ENCODE measurements at regions of chr5 and their contacts with region 1.

Region 1: GRCh38 chr5:159106569-159107282 is 7.0 kb upstream of the EBF1 start:
- DNase-seq: peak; percentile 79
- ATAC-seq: peak; percentile 71
- H3K4me3 Mint-ChIP-seq: peak overlapping the region; percentile 86
- H3K27ac Mint-ChIP-seq: peak overlapping the region; percentile 95
- H3K4me1 Mint-ChIP-seq: peaks cover 53% of the 10 kb centered on the region
- H3K27me3 Mint-ChIP-seq: no peaks in the 10 kb centered on the region
- CTCF ChIP-seq: peak; percentile 69

Region 2: DNA sequence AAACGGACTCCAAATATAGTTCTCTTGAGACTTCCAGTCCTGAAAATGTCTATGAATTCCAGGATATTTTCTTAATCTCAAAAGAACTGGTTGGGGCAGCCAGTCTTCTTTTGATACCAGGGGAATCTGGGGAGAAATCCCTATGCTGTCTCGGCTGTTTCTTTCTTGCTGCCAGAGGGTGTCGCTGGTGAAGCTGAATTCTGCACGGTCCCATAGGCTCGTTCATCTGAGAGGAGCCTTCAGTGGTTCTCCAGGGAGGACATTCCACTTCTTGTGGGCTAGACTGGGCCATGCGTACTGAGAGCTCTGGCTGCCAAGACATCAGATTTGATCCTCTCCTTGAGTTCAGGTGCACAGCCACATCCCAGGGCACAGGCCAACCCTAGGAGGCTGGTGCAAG is 1092.8 kb before region 1 on chr5:
- CTCF ChIA-PET with region 1: no interaction called
- POLR2A ChIA-PET with region 1: no interaction called
- intact Hi-C with region 1: loop called (anchors 1 kb)
- DNase-seq: no peak
- ATAC-seq: no peak
- H3K4me3 Mint-ChIP-seq: no peak overlapping the region
- H3K27ac Mint-ChIP-seq: no peak overlapping the region
- H3K4me1 Mint-ChIP-seq: no peaks in the 10 kb centered on the region
- H3K27me3 Mint-ChIP-seq: peaks cover 22% of the 10 kb centered on the region
- CTCF ChIP-seq: no peak

Region 3: GRCh38 chr5:158194561-158194976 is 912.2 kb before region 1 on chr5:
- CTCF ChIA-PET with region 1: no interaction called
- POLR2A ChIA-PET with region 1: interaction called, 5 read pairs
- intact Hi-C with region 1: loop called (anchors 5 kb)
- DNase-seq: peak; percentile 32
- ATAC-seq: peak; percentile 75
- H3K4me3 Mint-ChIP-seq: peak overlapping the region; percentile 48
- H3K27ac Mint-ChIP-seq: peak overlapping the region; percentile 47
- H3K4me1 Mint-ChIP-seq: peaks cover 57% of the 10 kb centered on the region
- H3K27me3 Mint-ChIP-seq: no peaks in the 10 kb centered on the region
- CTCF ChIP-seq: no peak

Region 4: GRCh38 chr5:158751961-158752655 is 354.6 kb before region 1 on chr5:
- CTCF ChIA-PET with region 1: interaction called, 3 read pairs
- POLR2A ChIA-PET with region 1: interaction called, 12 read pairs
- intact Hi-C with region 1: loop called (anchors 2 kb)
- DNase-seq: no peak
- ATAC-seq: peak; percentile 83
- H3K4me3 Mint-ChIP-seq: peak overlapping the region; percentile 71
- H3K27ac Mint-ChIP-seq: peak overlapping the region; percentile 84
- H3K4me1 Mint-ChIP-seq: peaks cover 92% of the 10 kb centered on the region
- H3K27me3 Mint-ChIP-seq: no peaks in the 10 kb centered on the region
- CTCF ChIP-seq: no peak

Region 5: GRCh38 chr5:158953929-158954534 is 152.7 kb before region 1 on chr5:
- CTCF ChIA-PET with region 1: interaction called, 24 read pairs
- POLR2A ChIA-PET with region 1: interaction called, 483 read pairs
- intact Hi-C with region 1: no loop called
- DNase-seq: peak; percentile 51
- ATAC-seq: peak; percentile 73
- H3K4me3 Mint-ChIP-seq: peak overlapping the region; percentile 62
- H3K27ac Mint-ChIP-seq: peak overlapping the region; percentile 96
- H3K4me1 Mint-ChIP-seq: peaks cover 97% of the 10 kb centered on the region
- H3K27me3 Mint-ChIP-seq: no peaks in the 10 kb centered on the region
- CTCF ChIP-seq: no peak

Region 6: DNA sequence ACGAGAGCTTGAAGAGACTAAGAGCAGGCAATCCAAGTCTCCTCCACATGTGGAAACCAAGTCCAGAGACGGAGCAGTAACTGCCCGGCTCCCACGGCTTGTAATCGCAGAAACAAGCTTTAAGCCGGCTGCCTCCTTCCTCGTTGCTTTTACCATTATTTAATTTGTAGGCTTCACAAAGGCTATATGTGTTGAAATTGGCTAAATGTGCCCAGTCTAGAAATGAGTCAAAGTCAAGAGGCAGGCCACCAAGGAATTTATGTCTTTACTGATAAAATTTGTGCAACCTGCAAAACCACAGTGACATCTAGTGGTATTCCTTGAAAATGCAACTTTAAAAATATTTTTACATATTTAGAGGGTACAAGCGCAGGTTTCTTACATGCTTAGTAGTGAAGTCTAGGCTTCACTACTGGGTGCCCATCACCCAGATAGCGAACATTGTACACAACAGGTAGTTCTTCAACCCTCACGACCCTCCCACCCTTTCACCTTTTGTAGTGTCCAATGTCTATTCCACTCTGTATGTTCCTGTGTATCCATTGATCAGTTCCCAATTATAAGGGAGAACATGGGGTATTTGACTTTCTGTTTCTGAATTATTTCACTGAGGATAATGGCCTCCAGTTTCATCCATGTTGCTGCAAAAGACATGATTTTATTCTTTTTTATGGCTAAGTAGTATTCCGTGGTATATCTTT is 26.5 kb after region 1 on chr5:
- CTCF ChIA-PET with region 1: interaction called, 19 read pairs
- POLR2A ChIA-PET with region 1: interaction called, 4 read pairs
- intact Hi-C with region 1: loop called (anchors 2 kb)
- DNase-seq: no peak
- ATAC-seq: peak; percentile 50
- H3K4me3 Mint-ChIP-seq: no peak overlapping the region
- H3K27ac Mint-ChIP-seq: no peak overlapping the region
- H3K4me1 Mint-ChIP-seq: no peaks in the 10 kb centered on the region
- H3K27me3 Mint-ChIP-seq: no peaks in the 10 kb centered on the region
- CTCF ChIP-seq: peak; percentile 82

Measured in activated B cell treated with CpG ODN at 0.5 μM for 24 hours (primary cell).